Naive thymus-derived CD4-positive, alpha-beta T cell (primary cell): ENCODE measurements at regions of chr1 and their contacts with region 1.

Region 1: GRCh38 chr1:86704458-86704971 is at the start of gene SH3GLB1:
- DNase-seq: peak; percentile 83 to 93 (median 92)
- ATAC-seq: peak; percentile 93
- H3K4me3 ChIP-seq: peak within 1 kb of the TSS; percentile 83
- H3K4me3 Mint-ChIP-seq: peak within 1 kb of the TSS; percentile 95 to 99 (median 97)
- H3K27ac ChIP-seq: peak within 1 kb of the TSS; percentile 86
- H3K27ac Mint-ChIP-seq: peak within 1 kb of the TSS; percentile 96 to 99 (median 97)
- H3K4me1 ChIP-seq: peaks cover 16 to 17% of the 10 kb centered on the region in 2 donors
- H3K4me1 Mint-ChIP-seq: peaks cover 34 to 67% (median 56%) of the 10 kb centered on the region in 7 donors
- H3K27me3 ChIP-seq: no peaks in the 10 kb centered on the region
- H3K27me3 Mint-ChIP-seq: no peaks in the 10 kb centered on the region
- total RNA-seq, gene SH3GLB1: 36.7 to 72.0 (median 49.8) TPM

Region 2: DNA sequence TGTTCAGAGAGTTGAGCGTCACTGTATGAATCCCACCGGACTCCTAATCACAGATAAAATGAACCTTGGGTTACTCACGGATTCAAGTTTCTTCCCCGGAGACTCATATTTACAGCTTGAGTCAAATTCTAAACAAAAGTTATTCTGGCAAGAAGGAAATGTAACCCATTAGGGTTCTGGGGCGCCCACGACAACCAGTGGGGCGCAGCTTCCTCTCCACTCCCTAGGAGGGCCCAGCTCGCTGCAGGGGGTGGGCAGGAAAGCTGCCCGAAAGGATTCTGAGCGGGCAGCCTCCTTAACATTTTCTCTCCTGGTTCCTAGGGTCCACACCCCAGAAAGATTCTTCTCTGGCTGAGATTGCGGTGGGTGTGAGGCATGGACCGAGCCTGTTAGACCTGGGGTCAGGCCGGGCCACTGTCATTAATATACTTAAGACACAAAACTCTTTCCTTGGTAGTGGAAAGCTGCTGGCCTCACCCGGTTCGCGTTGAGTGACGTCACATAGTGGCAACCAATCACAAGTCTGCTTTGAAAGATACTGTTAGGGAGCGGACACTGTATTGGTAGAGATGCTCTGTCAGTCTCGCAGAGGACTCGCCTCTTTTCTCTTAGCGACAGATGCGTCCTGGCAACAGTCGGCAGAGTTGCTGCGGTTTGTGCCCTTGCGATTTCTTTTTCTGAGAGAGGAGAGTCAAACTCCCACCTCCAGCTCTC is 1642.6 kb before region 1 on chr1:
- CTCF ChIA-PET with region 1: no interaction called
- POLR2A ChIA-PET with region 1: no interaction called
- intact Hi-C with region 1: no loop called
- DNase-seq: peak; percentile 49 to 93 (median 86)
- ATAC-seq: peak; percentile 99
- H3K4me3 ChIP-seq: peak overlapping the region; percentile 57
- H3K4me3 Mint-ChIP-seq: peak overlapping the region; percentile 79 to 93 (median 88)
- H3K27ac ChIP-seq: peak overlapping the region; percentile 24
- H3K27ac Mint-ChIP-seq: peak overlapping the region; percentile 57 to 96 (median 92)
- H3K4me1 ChIP-seq: peaks cover 4 to 6% of the 10 kb centered on the region in 2 donors
- H3K4me1 Mint-ChIP-seq: peaks cover 11 to 21% (median 14%) of the 10 kb centered on the region in 7 donors
- H3K27me3 ChIP-seq: no peaks in the 10 kb centered on the region
- H3K27me3 Mint-ChIP-seq: peaks cover 3 to 39% (median 13%) of the 10 kb centered on the region in 5 donors

Region 3: DNA sequence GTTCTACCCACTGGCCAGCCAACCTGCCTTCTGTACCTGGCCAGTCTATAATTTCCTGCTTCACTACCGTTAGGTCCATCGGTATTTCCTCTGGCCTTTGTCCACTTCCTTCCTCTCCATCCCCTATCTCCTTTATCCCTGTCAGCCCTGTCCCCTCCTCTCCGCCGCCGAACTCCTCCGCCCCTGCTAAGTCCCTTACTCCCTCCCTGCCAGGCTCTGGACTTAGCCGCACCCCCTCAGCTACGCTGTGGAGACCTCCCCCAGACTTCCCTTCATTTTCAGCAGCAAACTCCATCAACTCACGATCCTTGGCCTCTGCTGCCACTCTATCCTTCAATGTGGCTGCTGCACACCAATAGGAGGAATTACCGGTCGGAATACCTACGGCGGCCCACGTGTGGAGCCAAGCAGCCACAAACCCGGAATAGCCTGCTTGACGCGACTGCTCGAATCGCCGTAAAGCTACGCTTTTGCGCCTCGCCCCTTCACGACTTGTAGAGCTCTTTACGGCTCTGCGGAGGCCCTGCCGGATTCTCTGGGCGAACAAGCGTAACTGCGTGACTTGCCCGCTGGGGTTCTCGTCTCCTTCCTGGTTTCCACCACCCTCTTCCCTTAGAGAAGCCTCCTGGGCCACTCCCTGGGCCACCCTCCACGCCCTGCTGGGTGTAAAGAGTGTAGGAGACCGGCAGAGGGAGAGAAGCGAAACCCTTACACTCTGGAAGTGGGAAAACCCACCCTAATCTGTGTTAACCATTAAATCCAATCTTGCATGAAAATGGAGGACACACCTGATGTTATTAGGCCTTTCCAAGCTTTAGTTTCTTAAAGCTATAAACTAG is 996.3 kb before region 1 on chr1 and contains the start of gene ZNHIT6:
- CTCF ChIA-PET with region 1: no interaction called
- POLR2A ChIA-PET with region 1: no interaction called
- intact Hi-C with region 1: loop called in 1 of 2 experiments (anchors 1 kb)
- DNase-seq: peak; percentile 62 to 94 (median 89)
- ATAC-seq: peak; percentile 99
- H3K4me3 ChIP-seq: peak within 1 kb of the TSS; percentile 90
- H3K4me3 Mint-ChIP-seq: no peak within 1 kb of the TSS
- H3K27ac ChIP-seq: peak within 1 kb of the TSS; percentile 77
- H3K27ac Mint-ChIP-seq: no peak within 1 kb of the TSS
- H3K4me1 ChIP-seq: peaks cover 14 to 21% of the 10 kb centered on the region in 2 donors
- H3K4me1 Mint-ChIP-seq: peaks cover 11 to 33% (median 18%) of the 10 kb centered on the region in 7 donors
- H3K27me3 ChIP-seq: no peaks in the 10 kb centered on the region
- H3K27me3 Mint-ChIP-seq: no peaks in the 10 kb centered on the region
- total RNA-seq, gene ZNHIT6: 13.8 to 22.2 (median 20.2) TPM

Region 4: GRCh38 chr1:86499987-86500593 is 204.4 kb before region 1 on chr1:
- CTCF ChIA-PET with region 1: interaction called, 4 read pairs
- POLR2A ChIA-PET with region 1: no interaction called
- intact Hi-C with region 1: loop called (anchors 1 to 10 kb)
- DNase-seq: peak in 6 of 9 donors; percentile 55 to 76 (median 73)
- ATAC-seq: peak; percentile 92
- H3K4me3 ChIP-seq: no peak overlapping the region
- H3K4me3 Mint-ChIP-seq: no peak overlapping the region
- H3K27ac ChIP-seq: no peak overlapping the region
- H3K27ac Mint-ChIP-seq: no peak overlapping the region
- H3K4me1 ChIP-seq: peaks cover 0 to 8% of the 10 kb centered on the region in 2 donors
- H3K4me1 Mint-ChIP-seq: peaks cover 0 to 18% (median 10%) of the 10 kb centered on the region in 7 donors
- H3K27me3 ChIP-seq: no peaks in the 10 kb centered on the region
- H3K27me3 Mint-ChIP-seq: peaks cover 6 to 46% (median 14%) of the 10 kb centered on the region in 5 donors

Region 5: DNA sequence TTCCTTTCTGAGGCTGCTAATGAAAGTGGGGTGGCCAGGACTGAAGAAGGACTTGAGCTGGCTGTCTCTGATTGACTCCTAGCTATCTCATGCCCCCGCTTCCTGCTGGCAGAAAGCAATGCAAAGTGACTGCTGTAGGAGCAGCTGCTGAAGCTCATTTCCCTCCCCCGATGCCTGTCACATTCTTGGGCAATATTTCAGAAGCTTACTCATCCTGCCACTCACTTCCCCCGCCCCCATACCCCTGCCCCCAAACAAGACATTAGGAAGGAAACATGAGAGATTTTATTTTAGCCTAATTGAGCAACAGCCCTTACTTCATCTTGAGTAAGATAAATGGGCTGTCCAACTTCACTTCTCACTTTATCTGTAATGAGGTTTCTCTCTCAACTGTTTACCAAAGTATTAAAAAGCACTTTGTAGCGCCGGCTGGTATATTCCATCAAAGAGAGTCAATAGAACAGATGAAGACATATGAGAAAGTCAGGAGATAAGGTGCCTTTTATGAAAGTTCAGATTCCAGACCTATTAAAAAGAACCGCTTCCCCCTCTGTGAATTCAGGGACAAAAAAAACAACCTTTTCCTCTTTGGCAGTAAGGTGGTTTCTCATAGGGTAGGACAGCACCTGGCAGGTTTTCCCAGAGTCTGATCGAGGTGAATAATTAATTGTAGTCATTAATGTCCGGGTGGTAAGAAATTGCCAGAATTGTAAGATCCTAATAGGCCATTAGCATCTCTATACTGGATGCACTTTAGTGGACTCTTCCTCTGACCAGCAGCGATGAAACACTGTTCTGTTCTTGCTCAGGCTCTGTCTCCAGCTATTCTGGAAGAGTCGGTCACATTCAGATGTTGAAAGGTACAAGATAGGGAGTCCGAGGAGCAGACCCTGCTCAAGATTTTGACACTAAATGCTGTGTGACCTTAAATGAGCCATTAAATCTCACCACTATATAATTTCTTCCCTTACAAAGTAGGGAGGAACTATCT is 70.1 kb after region 1 on chr1:
- CTCF ChIA-PET with region 1: no interaction called
- POLR2A ChIA-PET with region 1: no interaction called
- intact Hi-C with region 1: no loop called
- DNase-seq: peak in 5 of 9 donors; percentile 1 to 38 (median 12)
- ATAC-seq: peak; percentile 91
- H3K4me3 ChIP-seq: no peak overlapping the region
- H3K4me3 Mint-ChIP-seq: peak overlapping the region in 3 of 10 donors; percentile 3 to 35 (median 21)
- H3K27ac ChIP-seq: no peak overlapping the region
- H3K27ac Mint-ChIP-seq: peak overlapping the region in 1 of 9 donors; percentile 91
- H3K4me1 ChIP-seq: no peaks in the 10 kb centered on the region
- H3K4me1 Mint-ChIP-seq: peaks cover 0 to 16% (median 14%) of the 10 kb centered on the region in 7 donors
- H3K27me3 ChIP-seq: no peaks in the 10 kb centered on the region
- H3K27me3 Mint-ChIP-seq: peaks cover 0 to 4% (median 0%) of the 10 kb centered on the region in 5 donors

Region 6: GRCh38 chr1:86833461-86834215 is 129.1 kb after region 1 on chr1:
- CTCF ChIA-PET with region 1: no interaction called
- POLR2A ChIA-PET with region 1: no interaction called
- intact Hi-C with region 1: loop called in 1 of 2 experiments (anchors 1 kb)
- DNase-seq: peak; percentile 9 to 69 (median 60)
- ATAC-seq: peak; percentile 84
- H3K4me3 ChIP-seq: no peak overlapping the region
- H3K4me3 Mint-ChIP-seq: no peak overlapping the region
- H3K27ac ChIP-seq: no peak overlapping the region
- H3K27ac Mint-ChIP-seq: no peak overlapping the region
- H3K4me1 ChIP-seq: no peaks in the 10 kb centered on the region
- H3K4me1 Mint-ChIP-seq: peaks cover 0 to 7% (median 0%) of the 10 kb centered on the region in 7 donors
- H3K27me3 ChIP-seq: no peaks in the 10 kb centered on the region
- H3K27me3 Mint-ChIP-seq: peaks cover 0 to 7% (median 0%) of the 10 kb centered on the region in 5 donors

Region 7: GRCh38 chr1:87084244-87084836 is 379.8 kb after region 1 on chr1:
- CTCF ChIA-PET with region 1: interaction called, 7 read pairs
- POLR2A ChIA-PET with region 1: no interaction called
- intact Hi-C with region 1: loop called in 1 of 2 experiments (anchors 10 kb)
- DNase-seq: peak in 6 of 9 donors; percentile 11 to 59 (median 44)
- ATAC-seq: peak; percentile 65
- H3K4me3 ChIP-seq: no peak overlapping the region
- H3K4me3 Mint-ChIP-seq: no peak overlapping the region
- H3K27ac ChIP-seq: no peak overlapping the region
- H3K27ac Mint-ChIP-seq: no peak overlapping the region
- H3K4me1 ChIP-seq: no peaks in the 10 kb centered on the region
- H3K4me1 Mint-ChIP-seq: peaks cover 0 to 6% (median 4%) of the 10 kb centered on the region in 7 donors
- H3K27me3 ChIP-seq: no peaks in the 10 kb centered on the region
- H3K27me3 Mint-ChIP-seq: no peaks in the 10 kb centered on the region